Vagina (tissue), 2 donors: ENCODE measurements at regions of chr19 and their contacts with region 1.

Region 1: GRCh38 chr19:46614114-46614722 is 10.7 kb downstream of the PTGIR start:
- DNase-seq: no peak
- H3K4me3 ChIP-seq: no peak overlapping the region
- H3K27ac ChIP-seq: no peak overlapping the region
- H3K4me1 ChIP-seq: peaks cover 27% of the 10 kb centered on the region
- H3K27me3 ChIP-seq: no peaks in the 10 kb centered on the region
- CTCF ChIP-seq: peak; percentile 80 to 92 (median 86)
- POLR2A ChIP-seq: no peak

Region 2: DNA sequence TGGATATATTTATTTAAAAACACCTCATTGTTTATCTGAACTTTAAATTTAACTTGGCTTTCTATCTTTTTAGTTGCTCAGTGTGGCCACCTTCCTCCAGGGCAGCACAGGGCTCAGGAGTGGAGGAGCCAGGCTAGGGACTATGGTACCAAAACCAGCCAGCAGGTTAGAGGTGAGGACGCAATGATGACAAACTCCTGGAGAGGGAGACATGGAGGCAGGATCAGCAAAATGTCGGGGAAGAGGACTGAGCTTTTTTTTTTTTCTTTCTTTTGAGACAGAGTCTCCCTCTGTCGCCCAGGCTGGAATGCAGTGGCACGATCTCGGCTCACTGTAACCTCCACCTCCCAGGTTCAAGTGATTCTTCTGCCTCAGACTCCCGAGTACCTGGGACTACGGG is 42.7 kb before region 1 on chr19:
- intact Hi-C with region 1: loop called (anchors 2 kb)
- DNase-seq: no peak
- H3K4me3 ChIP-seq: no peak overlapping the region
- H3K27ac ChIP-seq: no peak overlapping the region
- H3K4me1 ChIP-seq: no peaks in the 10 kb centered on the region
- H3K27me3 ChIP-seq: no peaks in the 10 kb centered on the region
- CTCF ChIP-seq: no peak
- POLR2A ChIP-seq: no peak

Region 3: DNA sequence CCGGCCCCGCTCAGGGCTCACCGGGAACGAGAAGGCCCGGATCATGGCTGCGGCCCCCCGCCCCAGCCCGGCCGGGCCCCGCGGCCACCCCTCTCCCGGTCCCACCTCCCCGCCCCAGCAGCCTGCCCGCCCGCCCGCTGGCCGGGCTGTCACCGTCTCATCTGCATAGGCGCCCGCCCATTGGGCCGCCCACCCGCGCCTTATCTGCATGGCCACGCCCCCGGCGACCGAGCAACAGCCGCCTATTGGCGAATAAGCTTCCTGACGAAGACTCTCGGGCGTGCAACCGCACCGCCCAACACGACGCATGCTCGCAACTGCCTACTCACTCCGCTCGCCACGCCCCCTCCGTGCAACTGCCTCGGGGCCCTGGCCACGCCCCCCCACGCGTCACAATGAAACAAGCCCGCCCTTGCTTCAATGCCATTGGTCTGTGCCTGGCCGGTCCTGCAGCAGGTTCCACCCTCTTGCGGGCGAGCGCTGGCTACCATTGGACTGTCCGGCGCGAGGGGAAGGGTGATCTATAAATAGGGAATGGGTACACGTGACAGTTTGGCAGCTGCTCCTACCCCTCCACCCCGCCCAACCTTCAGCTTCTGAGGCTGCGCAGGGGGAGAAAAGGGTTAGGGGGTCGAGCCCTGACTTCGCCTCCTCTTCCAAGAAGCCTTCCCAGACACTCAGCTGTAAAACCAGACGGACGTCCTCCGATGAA is 47.0 kb after region 1 on chr19 and contains the start of gene DACT3:
- intact Hi-C with region 1: loop called (anchors 5 kb)
- DNase-seq: peak; percentile 100
- H3K4me3 ChIP-seq: peak within 1 kb of the TSS; percentile 56 to 74
- H3K27ac ChIP-seq: peak within 1 kb of the TSS; percentile 94
- H3K4me1 ChIP-seq: peaks cover 38% of the 10 kb centered on the region
- H3K27me3 ChIP-seq: no peaks in the 10 kb centered on the region
- CTCF ChIP-seq: peak in 2 of 3 experiments; percentile 9 to 27
- POLR2A ChIP-seq: peak in 1 of 2 donors; percentile 50
- total RNA-seq, gene DACT3: 13.8 TPM

Region 4: DNA sequence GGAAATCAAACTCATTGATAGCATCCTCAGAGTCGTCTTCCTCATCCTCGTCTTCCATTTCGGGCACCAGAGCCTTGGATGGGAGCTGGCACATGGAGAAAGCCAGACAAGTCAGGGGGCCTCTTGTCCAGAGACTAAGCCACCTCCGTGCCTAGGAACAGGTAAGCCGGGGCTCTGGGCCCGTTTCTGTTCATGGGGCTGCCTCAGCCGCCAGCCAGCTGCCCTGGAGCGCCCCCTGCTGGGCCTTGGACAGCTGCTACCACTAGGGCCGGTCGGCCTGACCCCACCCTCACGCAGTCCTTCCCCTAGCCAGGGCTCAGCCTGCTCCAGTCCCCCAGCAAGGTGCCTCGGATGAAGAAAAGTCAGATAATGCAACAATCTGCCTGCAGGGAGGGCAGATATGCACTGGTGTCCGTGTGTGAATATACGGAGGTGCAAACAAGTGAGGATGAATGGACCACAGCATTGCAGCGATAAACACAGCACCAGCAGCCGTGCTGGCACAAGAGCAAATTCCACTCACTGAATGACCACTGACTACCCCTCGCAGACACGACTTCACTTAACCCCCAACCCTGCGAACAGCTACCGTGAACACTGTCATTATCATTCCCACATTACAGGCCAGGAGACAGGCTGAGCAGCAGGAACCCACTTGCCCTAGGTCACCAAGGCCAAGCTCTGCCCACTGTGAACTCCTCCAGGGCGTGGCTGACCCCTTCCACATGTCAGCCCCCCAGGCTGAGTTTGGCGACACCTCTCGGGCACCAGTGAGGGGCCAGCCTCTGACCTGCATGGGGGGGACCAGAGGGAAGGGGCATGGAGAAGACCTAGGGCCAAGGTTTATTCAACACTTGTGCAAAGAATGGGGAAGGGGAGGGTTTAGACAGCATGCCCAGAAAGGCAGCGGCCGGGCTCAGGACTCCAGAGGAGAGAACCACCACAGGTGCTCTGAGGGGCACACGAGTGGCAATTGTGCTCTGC is 114.8 kb after region 1 on chr19:
- intact Hi-C with region 1: loop called (anchors 10 kb)
- DNase-seq: no peak
- H3K4me3 ChIP-seq: no peak overlapping the region
- H3K27ac ChIP-seq: peak overlapping the region; percentile 45
- H3K4me1 ChIP-seq: peaks cover 31% of the 10 kb centered on the region
- H3K27me3 ChIP-seq: no peaks in the 10 kb centered on the region
- CTCF ChIP-seq: peak; percentile 67 to 87 (median 78)
- POLR2A ChIP-seq: no peak